Mammary epithelial cell (primary cell): ENCODE measurements at regions of chr5 and their contacts with region 1.

Region 1: GRCh38 chr5:96226941-96227552 is 206.0 kb downstream of the PCSK1 start:
- DNase-seq: peak; percentile 89
- H3K4me3 ChIP-seq: peak overlapping the region in 1 of 3 experiments; percentile 5
- H3K27ac ChIP-seq: peak overlapping the region; percentile 96
- H3K4me1 ChIP-seq: peaks cover 30% of the 10 kb centered on the region
- H3K27me3 ChIP-seq: no peaks in the 10 kb centered on the region
- CTCF ChIP-seq: no peak

Region 2: DNA sequence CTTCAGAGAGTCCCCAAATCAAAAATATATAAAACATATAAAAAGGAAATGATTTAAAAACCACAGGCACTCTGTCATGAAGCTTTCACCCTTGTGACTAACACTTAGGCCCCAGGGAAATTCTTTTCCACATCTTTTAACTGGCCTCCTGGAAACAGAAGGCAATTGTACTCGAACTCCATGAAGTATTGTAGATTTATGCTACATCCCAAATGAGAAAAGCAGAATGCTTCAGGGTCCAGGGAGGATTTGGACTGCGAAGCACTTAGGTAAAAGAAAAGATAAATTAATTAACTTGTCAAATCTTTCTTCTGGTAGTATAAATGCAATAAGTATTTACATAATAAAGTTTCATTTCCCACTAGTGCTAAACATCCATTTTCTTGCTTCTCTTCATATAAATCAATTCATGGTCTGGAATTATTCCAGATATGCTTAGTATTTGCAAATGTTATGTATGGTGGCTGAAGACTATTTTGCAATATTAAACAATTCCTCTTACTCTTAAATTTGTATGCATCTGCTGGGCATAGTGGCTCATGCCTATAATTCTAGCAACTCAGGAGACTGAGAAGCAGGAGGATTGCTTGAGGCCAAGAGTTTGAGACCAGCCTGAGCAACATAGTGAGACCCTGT is 200.5 kb before region 1 on chr5:
- CTCF ChIA-PET with region 1: no interaction called
- dilution Hi-C with region 1: no loop called
- in situ Hi-C with region 1: no loop called
- intact Hi-C with region 1: loop called (anchors 2 kb)
- DNase-seq: peak; percentile 91
- H3K4me3 ChIP-seq: peak overlapping the region in 1 of 3 experiments; percentile 25
- H3K27ac ChIP-seq: peak overlapping the region; percentile 92
- H3K4me1 ChIP-seq: peaks cover 59% of the 10 kb centered on the region
- H3K27me3 ChIP-seq: no peaks in the 10 kb centered on the region
- CTCF ChIP-seq: no peak

Region 3: DNA sequence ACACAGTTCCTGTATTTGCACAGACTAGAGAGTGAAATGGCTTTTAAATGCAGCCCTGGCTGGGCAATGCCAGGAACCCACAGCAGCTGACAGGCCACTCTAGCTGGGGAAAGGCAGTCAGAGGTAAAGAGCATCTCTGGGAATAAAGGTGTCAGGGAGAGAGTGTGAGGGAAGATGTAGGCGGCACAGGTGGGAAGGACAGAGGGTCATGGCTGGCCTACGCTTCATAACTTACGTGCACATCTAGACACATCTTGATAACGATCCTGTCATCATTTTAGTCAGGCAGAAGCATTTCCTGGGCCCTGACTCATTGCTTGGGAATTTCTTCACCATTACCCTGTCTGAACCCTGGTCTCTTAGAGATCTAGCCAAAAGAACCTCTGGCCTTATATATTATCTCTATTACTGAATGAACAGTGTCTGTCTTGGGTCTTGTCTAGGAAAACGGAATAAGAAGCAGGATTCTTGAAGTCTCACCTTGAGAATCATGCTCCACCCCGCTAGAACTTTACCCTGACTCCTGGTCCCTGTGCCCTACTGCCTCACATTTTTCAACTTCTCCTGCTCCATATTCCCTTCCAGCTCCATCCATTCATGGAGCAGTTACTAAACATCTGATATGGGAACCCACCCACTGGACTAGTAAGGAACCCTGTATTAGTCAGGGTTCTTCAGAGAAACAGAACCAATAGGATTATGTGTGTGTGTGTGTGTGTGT is 159.0 kb before region 1 on chr5:
- CTCF ChIA-PET with region 1: no interaction called
- dilution Hi-C with region 1: no loop called
- in situ Hi-C with region 1: no loop called
- intact Hi-C with region 1: loop called (anchors 2 kb)
- DNase-seq: peak; percentile 94
- H3K4me3 ChIP-seq: no peak overlapping the region
- H3K27ac ChIP-seq: peak overlapping the region; percentile 89
- H3K4me1 ChIP-seq: peaks cover 46% of the 10 kb centered on the region
- H3K27me3 ChIP-seq: no peaks in the 10 kb centered on the region
- CTCF ChIP-seq: no peak

Region 4: DNA sequence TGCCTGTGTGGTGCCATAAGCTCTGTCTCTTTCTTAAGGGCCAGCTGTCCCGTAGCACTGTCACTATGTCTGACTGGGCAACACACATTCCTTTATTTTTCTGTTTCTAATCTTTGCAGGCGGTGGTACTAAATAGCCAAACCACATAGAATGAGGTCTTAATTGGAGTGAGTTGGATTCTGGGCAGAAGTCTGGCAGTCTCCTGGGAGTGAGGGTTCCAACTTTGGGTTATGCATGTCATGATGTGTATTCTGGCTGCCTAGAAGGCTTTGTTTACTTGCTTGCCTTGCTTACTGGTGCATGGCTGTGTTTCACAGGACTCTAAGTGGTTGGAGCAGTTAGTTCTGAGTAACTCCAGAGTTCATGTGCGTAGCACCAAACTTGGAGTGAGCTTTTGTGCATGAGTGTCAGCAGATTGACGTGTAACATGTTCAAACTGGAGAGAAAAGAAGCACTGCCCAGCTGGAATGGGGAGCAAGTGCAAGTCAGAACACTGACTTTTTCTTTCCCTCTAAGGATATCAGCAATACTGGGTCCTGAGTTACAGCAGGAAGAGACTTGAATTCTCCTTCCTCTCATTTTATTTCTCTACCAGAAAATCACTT is 20.2 kb after region 1 on chr5:
- CTCF ChIA-PET with region 1: no interaction called
- dilution Hi-C with region 1: no loop called
- in situ Hi-C with region 1: no loop called
- intact Hi-C with region 1: loop called (anchors 2 kb)
- DNase-seq: peak; percentile 93
- H3K4me3 ChIP-seq: no peak overlapping the region
- H3K27ac ChIP-seq: peak overlapping the region; percentile 61
- H3K4me1 ChIP-seq: peaks cover 41% of the 10 kb centered on the region
- H3K27me3 ChIP-seq: no peaks in the 10 kb centered on the region
- CTCF ChIP-seq: no peak

Region 5: DNA sequence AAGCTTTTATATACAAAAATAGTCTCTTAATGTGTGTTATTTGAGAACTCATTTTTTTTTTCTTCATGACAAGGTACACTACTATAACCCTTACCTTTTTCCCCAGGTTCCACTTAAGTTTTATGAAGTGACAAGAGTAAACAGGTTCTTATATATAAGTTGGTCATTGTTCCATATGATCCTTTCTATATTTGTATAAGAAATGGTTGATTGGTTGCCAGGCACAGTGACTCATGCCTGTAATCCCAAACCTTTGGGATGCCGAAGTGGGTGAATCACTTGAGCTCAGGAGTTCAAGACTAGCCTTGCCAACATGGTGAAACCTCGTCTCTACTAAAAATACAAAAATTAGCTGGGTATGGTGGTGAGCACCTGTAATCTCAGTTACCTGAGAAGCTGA is 97.7 kb after region 1 on chr5:
- CTCF ChIA-PET with region 1: no interaction called
- dilution Hi-C with region 1: no loop called
- in situ Hi-C with region 1: no loop called
- intact Hi-C with region 1: loop called (anchors 1 kb)
- DNase-seq: peak; percentile 87
- H3K4me3 ChIP-seq: no peak overlapping the region
- H3K27ac ChIP-seq: peak overlapping the region; percentile 66
- H3K4me1 ChIP-seq: peaks cover 26% of the 10 kb centered on the region
- H3K27me3 ChIP-seq: no peaks in the 10 kb centered on the region
- CTCF ChIP-seq: no peak